ENCODE measurements at regions of chr12 and their contacts with region 1.

Region 1: GRCh38 chr12:98516184-98516873 is 939 bp downstream of the TMPO start:
- DNase-seq: peak; percentile 40
- H3K4me3 ChIP-seq: peak overlapping the region; percentile 98
- H3K27me3 ChIP-seq: no peaks in the 10 kb centered on the region
- CTCF ChIP-seq: peak; percentile 79

Region 2: DNA sequence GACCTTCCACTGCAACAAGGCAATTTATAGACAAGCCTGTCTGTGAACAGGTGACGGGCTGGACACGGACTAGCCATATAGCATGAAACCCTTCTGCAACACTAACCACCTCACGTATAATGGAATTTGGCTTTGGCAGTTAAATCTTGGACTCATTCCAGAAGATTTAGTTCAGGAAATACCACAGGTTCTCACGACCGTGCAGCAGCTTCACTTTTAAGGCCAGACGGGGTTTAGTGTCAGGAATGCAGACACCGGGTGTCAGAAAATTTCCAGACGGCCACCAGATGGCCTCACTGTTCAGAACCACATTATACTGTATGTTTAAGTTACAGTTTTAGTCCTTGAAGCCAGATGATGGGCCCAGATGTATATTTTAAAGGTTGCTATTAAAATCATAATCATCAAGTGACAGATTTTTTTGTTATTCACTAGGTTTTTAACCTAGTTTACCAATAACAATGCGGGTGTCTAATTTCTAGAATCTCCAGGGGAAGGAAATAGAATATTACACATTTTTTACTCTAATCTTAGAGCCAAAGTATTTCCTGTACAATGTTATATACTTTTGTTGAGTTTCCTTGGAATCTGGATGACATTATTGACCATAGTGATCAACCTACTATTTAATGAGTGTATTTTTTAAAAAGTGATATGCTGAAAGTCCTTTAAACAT is 91.5 kb before region 1 on chr12:
- CTCF ChIA-PET with region 1: interaction called, 32 read pairs
- POLR2A ChIA-PET with region 1: no interaction called
- DNase-seq: peak; percentile 46
- H3K4me3 ChIP-seq: no peak overlapping the region
- H3K27me3 ChIP-seq: no peaks in the 10 kb centered on the region
- CTCF ChIP-seq: peak; percentile 68

Region 3: GRCh38 chr12:98490501-98491453 is 25.6 kb before region 1 on chr12:
- CTCF ChIA-PET with region 1: interaction called, 33 read pairs
- POLR2A ChIA-PET with region 1: no interaction called
- DNase-seq: peak; percentile 69
- H3K4me3 ChIP-seq: no peak overlapping the region
- H3K27me3 ChIP-seq: no peaks in the 10 kb centered on the region
- CTCF ChIP-seq: peak; percentile 86

Region 4: DNA sequence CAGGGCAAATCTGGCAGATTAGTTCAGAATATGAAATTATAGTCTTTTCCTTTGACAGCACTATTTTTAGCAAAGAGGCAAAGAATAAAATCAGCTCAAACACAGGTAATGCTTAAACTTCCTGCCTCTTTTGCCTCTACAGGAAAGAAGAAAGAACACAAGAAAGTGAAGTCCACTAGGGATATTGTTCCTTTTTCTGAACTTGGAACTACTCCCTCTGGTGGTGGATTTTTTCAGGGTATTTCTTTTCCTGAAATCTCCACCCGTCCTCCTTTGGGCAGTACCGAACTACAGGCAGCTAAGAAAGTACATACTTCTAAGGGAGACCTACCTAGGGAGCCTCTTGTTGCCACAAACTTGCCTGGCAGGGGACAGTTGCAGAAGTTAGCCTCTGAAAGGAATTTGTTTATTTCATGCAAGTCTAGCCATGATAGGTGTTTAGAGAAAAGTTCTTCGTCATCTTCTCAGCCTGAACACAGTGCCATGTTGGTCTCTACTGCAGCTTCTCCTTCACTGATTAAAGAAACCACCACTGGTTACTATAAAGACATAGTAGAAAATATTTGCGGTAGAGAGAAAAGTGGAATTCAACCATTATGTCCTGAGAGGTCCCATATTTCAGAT is 16.5 kb after region 1 on chr12:
- CTCF ChIA-PET with region 1: interaction called, 12 read pairs
- POLR2A ChIA-PET with region 1: interaction called, 10 read pairs
- DNase-seq: no peak
- H3K4me3 ChIP-seq: no peak overlapping the region
- H3K27me3 ChIP-seq: no peaks in the 10 kb centered on the region
- CTCF ChIP-seq: peak; percentile 58